OCI-LY7 (cell line): ENCODE measurements at regions of chr6 and their contacts with region 1.

Region 1: GRCh38 chr6:3277851-3278416 is 19.2 kb downstream of the PSMG4 start:
- DNase-seq: no peak
- H3K4me3 ChIP-seq: no peak overlapping the region
- H3K27ac ChIP-seq: no peak overlapping the region
- H3K4me1 ChIP-seq: no peaks in the 10 kb centered on the region
- CTCF ChIP-seq: no peak

Region 2: DNA sequence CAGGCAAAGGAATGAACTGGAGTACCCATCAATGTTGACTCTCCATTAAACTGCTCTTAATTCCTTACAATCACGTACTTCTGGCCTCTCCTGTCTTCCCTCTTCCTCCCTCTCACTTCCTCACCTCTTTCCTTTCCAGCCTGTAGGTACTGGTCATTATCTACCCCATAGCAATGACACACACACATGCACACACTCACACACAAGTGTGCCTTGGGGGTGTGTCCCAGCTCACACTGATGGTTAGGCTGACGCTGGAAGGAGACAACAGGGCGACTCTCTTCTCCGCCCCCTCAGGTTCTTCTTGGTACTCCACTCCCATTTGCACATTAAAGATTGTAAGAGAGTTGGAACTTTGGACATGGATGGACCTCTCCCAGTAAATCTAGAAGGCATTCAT is 360.9 kb before region 1 on chr6:
- CTCF ChIA-PET with region 1: no interaction called
- POLR2A ChIA-PET with region 1: no interaction called
- intact Hi-C with region 1: no loop called
- DNase-seq: no peak
- H3K4me3 ChIP-seq: no peak overlapping the region
- H3K27ac ChIP-seq: no peak overlapping the region
- H3K4me1 ChIP-seq: peaks cover 8% of the 10 kb centered on the region
- CTCF ChIP-seq: 0 out of 2 replicates have a peak, but pooled peaks have one; percentile 29

Region 3: GRCh38 chr6:3351105-3351676 is 73.3 kb after region 1 on chr6:
- CTCF ChIA-PET with region 1: no interaction called
- POLR2A ChIA-PET with region 1: no interaction called
- intact Hi-C with region 1: no loop called
- DNase-seq: no peak
- H3K4me3 ChIP-seq: no peak overlapping the region
- H3K27ac ChIP-seq: no peak overlapping the region
- H3K4me1 ChIP-seq: peaks cover 41% of the 10 kb centered on the region
- CTCF ChIP-seq: no peak

Region 4: GRCh38 chr6:3410385-3411360 is 132.7 kb after region 1 on chr6:
- CTCF ChIA-PET with region 1: no interaction called
- POLR2A ChIA-PET with region 1: no interaction called
- intact Hi-C with region 1: loop called (anchors 1 kb)
- DNase-seq: peak; percentile 79
- H3K4me3 ChIP-seq: no peak overlapping the region
- H3K27ac ChIP-seq: no peak overlapping the region
- H3K4me1 ChIP-seq: no peaks in the 10 kb centered on the region
- CTCF ChIP-seq: peak; percentile 93

Region 5: DNA sequence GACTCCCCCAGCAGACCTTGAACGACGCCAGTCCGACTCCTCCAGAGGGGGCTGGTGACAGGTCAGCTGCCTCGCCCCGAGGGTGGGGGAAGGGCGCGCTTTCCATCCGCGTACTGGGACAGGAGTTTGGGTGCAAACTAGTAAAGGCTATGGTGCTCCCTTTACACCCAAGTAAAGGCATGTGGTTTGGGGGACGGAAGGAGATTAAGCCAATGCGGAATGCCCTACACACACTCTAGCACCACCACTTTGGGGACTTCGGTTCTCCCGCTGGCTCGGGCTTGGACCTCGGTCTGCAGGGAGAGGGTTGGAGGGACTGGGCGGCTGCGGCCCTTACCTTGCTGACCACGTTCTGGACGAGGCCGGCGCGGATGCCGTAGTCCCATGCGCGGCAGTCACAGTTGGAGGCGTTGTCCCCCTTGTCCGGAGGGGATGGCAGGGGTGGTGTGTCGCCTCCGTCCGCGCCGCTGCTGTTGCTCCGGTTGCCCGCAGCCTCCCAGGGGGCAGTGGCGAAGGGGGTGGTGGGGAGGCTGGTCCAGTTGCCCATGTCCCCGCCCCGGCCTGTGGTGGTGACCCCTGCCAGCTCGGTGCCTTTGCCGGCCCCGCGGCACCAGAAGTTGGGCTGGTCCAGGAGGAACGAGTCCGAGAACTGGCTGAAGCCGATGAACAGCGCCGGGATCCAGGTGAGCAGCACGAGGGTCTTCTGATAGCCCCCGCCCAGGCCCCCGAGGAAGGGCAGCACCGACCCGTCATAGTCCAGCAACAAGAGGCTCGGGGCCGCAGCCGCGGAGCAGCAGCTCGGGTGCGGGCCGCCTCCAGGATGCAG is 177.8 kb after region 1 on chr6:
- CTCF ChIA-PET with region 1: no interaction called
- POLR2A ChIA-PET with region 1: no interaction called
- intact Hi-C with region 1: loop called (anchors 2 kb)
- DNase-seq: no peak
- H3K4me3 ChIP-seq: no peak overlapping the region
- H3K27ac ChIP-seq: no peak overlapping the region
- H3K4me1 ChIP-seq: no peaks in the 10 kb centered on the region
- CTCF ChIP-seq: no peak

Region 6: GRCh38 chr6:3732345-3733141 is 454.6 kb after region 1 on chr6:
- CTCF ChIA-PET with region 1: no interaction called
- POLR2A ChIA-PET with region 1: no interaction called
- intact Hi-C with region 1: loop called (anchors 1 kb)
- DNase-seq: peak; percentile 65
- H3K4me3 ChIP-seq: no peak overlapping the region
- H3K27ac ChIP-seq: no peak overlapping the region
- H3K4me1 ChIP-seq: no peaks in the 10 kb centered on the region
- CTCF ChIP-seq: peak; percentile 92